Transverse colon (tissue), 4 donors: ENCODE measurements at regions of chr3 and their contacts with region 1.

Region 1: DNA sequence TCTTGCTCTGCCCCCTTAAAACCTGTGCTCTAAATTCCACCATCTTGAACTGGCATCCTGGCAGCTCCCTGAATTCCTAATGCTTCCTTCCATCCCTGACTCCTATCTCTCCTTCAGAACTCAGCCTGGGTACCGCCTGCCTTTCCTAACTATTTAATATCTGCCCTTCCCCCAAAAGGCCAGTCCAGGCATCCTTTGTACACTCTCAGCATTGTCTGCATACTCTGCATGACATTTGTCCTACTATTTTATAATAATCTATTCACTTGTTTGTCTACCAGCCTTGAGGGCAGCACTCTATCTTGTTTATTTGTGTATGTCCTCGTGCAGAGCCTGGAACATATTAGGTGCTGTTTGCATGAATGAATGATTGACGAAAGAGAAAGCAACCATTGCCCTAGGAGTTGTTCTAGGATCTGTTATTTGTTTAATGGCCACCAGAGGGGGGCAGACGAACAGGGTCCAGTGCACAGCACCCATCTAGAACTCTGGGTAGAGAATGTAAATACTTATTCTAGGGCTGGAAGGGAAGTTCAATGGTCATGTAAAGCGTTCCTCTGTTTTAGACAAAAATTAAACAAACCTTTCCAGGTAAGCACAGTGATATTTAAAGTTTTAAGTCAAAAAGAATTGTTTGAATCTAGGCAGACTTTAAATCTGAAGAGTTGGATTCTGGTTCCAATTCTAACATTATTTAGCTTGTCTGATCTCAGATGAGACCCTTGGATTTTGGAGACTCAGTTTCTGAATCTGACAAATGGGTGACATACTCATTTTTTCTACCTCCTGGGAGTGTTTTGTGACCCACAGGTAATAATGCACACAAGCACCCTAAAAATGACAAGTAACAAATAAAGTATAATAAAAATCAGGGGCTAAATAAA is 125.8 kb upstream of the GALNT15 start:
- DNase-seq: peak; percentile 50
- H3K4me3 ChIP-seq: peak overlapping the region in 1 of 4 donors; percentile 25
- H3K27ac ChIP-seq: no peak overlapping the region
- H3K4me1 ChIP-seq: no peaks in the 10 kb centered on the region
- H3K27me3 ChIP-seq: no peaks in the 10 kb centered on the region
- CTCF ChIP-seq: peak; percentile 74 to 88 (median 81)
- EP300 ChIP-seq: no peak
- POLR2A ChIP-seq: no peak

Region 2: DNA sequence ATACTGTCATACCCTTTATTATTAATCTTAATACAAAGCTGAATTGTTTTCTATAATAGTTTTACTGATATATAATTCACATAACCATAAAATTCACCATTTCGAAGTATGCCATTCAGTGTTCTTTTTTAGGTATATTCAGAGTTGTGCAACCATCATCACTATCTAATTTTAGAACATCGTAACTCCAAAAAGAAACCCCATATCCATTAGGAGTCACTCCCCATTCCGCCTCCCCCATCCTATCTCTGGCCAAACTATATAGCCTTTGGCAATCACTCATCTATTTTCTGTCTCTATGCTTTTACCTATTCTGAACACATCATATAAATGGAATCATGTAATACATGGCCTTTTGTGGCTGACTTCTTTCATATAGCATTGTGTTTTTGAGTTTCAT is 43.9 kb before region 1 on chr3:
- in situ Hi-C with region 1: no loop called
- intact Hi-C with region 1: no loop called
- DNase-seq: no peak
- H3K4me3 ChIP-seq: no peak overlapping the region
- H3K27ac ChIP-seq: no peak overlapping the region
- H3K4me1 ChIP-seq: no peaks in the 10 kb centered on the region
- H3K27me3 ChIP-seq: no peaks in the 10 kb centered on the region
- CTCF ChIP-seq: no peak
- EP300 ChIP-seq: no peak
- POLR2A ChIP-seq: no peak

Region 3: GRCh38 chr3:16177962-16178627 is 129.4 kb after region 1 on chr3:
- in situ Hi-C with region 1: loop called in 2 of 4 experiments (anchors 5 kb)
- intact Hi-C with region 1: loop called (anchors 5 kb)
- DNase-seq: peak; percentile 79
- H3K4me3 ChIP-seq: peak overlapping the region in 1 of 4 donors; percentile 0
- H3K27ac ChIP-seq: no peak overlapping the region
- H3K4me1 ChIP-seq: peaks cover 0 to 16% (median 5%) of the 10 kb centered on the region in 4 donors
- H3K27me3 ChIP-seq: no peaks in the 10 kb centered on the region
- CTCF ChIP-seq: peak; percentile 88 to 97 (median 92)
- EP300 ChIP-seq: no peak
- POLR2A ChIP-seq: no peak

Region 4: DNA sequence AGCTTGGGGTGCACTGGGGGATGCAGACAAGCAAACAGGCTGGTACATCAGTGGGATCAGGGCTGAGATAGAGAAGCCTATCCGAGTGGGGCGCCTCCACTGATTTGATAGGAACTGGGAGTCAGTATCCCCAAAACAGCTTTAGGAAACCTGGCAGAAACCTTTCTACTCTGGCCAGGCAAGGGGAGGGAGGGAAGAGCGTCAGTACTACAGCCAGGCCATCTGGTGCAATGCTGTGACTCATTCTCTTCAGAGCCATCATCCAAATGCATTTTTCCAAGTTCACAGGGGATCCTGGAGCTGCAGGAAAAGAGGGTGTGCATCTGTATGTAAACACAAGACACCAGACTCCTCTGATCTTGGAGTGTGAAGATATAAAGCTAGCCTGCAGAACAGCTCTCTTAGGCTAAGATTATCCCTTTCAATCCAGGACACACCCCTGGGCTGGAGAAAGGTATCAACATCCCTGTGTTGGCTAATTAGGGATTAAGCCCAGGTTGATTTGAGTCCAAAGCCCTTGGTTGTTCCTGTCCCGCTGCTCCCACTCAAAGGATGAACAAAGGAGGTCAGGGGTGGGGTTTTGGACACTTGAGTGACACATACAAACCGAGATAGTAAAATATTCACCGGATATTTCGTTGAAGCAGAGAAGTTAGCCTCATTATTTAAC is 135.1 kb after region 1 on chr3:
- in situ Hi-C with region 1: loop called in 2 of 4 experiments (anchors 5 kb)
- intact Hi-C with region 1: loop called (anchors 5 kb)
- DNase-seq: no peak
- H3K4me3 ChIP-seq: no peak overlapping the region
- H3K27ac ChIP-seq: no peak overlapping the region
- H3K4me1 ChIP-seq: no peaks in the 10 kb centered on the region
- H3K27me3 ChIP-seq: no peaks in the 10 kb centered on the region
- CTCF ChIP-seq: no peak
- EP300 ChIP-seq: no peak
- POLR2A ChIP-seq: no peak

Region 5: DNA sequence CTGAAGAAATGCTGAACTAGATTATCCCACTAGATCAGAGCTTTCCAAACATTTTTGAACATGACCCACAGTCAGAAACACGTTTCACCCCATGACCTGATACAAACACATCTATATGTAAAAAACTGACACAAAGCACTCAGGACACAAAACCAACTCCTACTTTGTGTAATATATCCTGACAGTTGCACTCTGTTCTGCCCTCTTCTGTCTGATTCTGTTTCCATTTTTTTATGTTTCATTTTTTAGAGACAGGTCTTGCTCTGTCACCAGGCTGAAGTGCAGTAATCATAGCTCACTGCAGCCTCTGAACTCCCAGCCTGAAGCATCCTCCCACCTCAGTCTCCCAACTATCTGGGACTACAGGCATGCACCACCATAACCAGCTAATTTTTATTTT is 480.6 kb after region 1 on chr3:
- in situ Hi-C with region 1: loop called in 1 of 4 experiments (anchors 25 kb)
- intact Hi-C with region 1: no loop called
- DNase-seq: no peak
- H3K4me3 ChIP-seq: no peak overlapping the region
- H3K27ac ChIP-seq: no peak overlapping the region
- H3K4me1 ChIP-seq: no peaks in the 10 kb centered on the region
- H3K27me3 ChIP-seq: peaks cover 5% of the 10 kb centered on the region
- CTCF ChIP-seq: no peak
- EP300 ChIP-seq: no peak
- POLR2A ChIP-seq: no peak

Region 6: GRCh38 chr3:16550676-16551341 is 502.1 kb after region 1 on chr3:
- in situ Hi-C with region 1: loop called in 2 of 4 experiments (anchors 25 kb)
- intact Hi-C with region 1: no loop called
- DNase-seq: peak; percentile 64
- H3K4me3 ChIP-seq: no peak overlapping the region
- H3K27ac ChIP-seq: no peak overlapping the region
- H3K4me1 ChIP-seq: no peaks in the 10 kb centered on the region
- H3K27me3 ChIP-seq: no peaks in the 10 kb centered on the region
- CTCF ChIP-seq: peak; percentile 79 to 87 (median 82)
- EP300 ChIP-seq: no peak
- POLR2A ChIP-seq: no peak